Calu3 (cell line): ENCODE measurements at regions of chr14 and their contacts with region 1.

Region 1: DNA sequence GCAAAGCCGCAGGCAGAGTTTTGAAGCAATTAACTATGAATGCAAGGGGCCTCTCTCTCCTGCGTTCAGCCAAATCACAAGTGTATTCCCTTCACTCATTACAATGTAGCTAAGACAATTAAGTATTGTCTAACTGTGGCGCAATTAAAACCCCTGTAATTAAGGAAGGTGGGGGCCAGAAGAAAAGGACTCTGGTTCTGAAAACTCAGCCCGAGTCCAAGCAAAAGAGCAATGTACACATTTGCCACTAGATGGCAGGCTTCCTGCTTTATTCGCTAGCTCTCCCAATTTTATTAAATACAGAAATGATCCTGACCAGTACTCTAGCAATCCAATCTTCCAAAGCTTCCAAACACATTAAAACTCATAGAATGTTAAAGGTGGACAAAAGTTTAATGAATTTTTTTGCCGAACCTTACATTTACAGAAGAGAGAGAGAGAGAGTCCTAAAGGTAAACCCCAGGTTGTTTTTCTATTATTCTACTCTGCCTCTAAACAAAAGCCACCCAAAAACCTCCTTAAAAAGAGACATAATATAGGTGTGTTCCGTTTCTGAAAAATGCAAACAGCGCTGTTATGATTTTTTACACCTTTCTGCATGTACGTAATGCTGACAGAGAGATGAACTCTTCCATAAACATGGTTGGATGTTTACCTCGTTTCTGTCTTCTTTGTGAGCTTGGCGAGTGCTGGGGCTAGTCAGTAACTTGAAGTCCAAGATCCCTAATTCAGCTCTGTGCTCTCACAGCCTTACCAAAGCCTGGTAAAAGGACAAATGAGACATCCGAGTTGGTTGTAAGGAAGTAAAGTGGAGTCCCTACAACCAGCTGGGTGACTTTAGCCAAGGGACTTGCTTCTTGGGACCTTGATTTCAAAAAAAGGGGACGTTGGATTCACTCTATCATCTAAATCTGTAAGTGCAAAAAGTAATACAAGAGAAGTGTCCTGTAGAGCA is 50.9 kb upstream of the VASH1 start:
- DNase-seq: peak; percentile 26
- H3K4me3 Mint-ChIP-seq: no peak overlapping the region
- H3K27ac Mint-ChIP-seq: no peak overlapping the region
- H3K4me1 Mint-ChIP-seq: no peaks in the 10 kb centered on the region
- H3K27me3 Mint-ChIP-seq: peaks cover 57% of the 10 kb centered on the region
- CTCF ChIP-seq: peak; percentile 59

Region 2: GRCh38 chr14:76473481-76474263 is 236.7 kb before region 1 on chr14:
- CTCF ChIA-PET with region 1: no interaction called
- intact Hi-C with region 1: no loop called
- DNase-seq: no peak
- H3K4me3 Mint-ChIP-seq: no peak overlapping the region
- H3K27ac Mint-ChIP-seq: no peak overlapping the region
- H3K4me1 Mint-ChIP-seq: no peaks in the 10 kb centered on the region
- H3K27me3 Mint-ChIP-seq: peaks cover 76% of the 10 kb centered on the region
- CTCF ChIP-seq: no peak

Region 3: DNA sequence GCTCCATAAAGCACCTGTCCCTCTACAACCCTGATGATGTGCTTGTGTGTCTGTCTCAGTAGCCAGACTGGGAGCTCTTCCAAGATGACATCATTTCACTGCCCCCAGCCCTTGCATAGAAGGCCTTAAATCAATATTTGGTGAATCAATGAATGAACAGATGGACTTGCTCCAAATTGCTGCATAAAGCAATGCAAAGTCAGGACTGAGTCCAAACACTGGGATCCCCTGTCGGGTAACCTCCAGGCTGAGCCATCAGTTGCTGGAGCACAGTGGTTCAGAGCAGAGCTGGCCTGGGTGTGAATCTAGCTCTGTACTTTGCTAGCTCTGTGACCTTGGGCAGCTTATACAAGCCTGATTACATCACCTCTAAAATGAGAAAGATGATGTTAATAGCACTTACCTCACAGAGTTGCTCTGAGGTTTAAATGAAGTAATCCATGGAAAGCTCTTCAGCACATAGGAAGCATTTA is 69.4 kb before region 1 on chr14:
- CTCF ChIA-PET with region 1: no interaction called
- intact Hi-C with region 1: no loop called
- DNase-seq: no peak
- H3K4me3 Mint-ChIP-seq: no peak overlapping the region
- H3K27ac Mint-ChIP-seq: no peak overlapping the region
- H3K4me1 Mint-ChIP-seq: no peaks in the 10 kb centered on the region
- H3K27me3 Mint-ChIP-seq: peaks cover 75% of the 10 kb centered on the region
- CTCF ChIP-seq: no peak

Region 4: GRCh38 chr14:76690502-76691118 is 19.7 kb before region 1 on chr14:
- CTCF ChIA-PET with region 1: no interaction called
- intact Hi-C with region 1: no loop called
- DNase-seq: no peak
- H3K4me3 Mint-ChIP-seq: no peak overlapping the region
- H3K27ac Mint-ChIP-seq: no peak overlapping the region
- H3K4me1 Mint-ChIP-seq: no peaks in the 10 kb centered on the region
- H3K27me3 Mint-ChIP-seq: peaks cover 34% of the 10 kb centered on the region
- CTCF ChIP-seq: no peak

Region 5: DNA sequence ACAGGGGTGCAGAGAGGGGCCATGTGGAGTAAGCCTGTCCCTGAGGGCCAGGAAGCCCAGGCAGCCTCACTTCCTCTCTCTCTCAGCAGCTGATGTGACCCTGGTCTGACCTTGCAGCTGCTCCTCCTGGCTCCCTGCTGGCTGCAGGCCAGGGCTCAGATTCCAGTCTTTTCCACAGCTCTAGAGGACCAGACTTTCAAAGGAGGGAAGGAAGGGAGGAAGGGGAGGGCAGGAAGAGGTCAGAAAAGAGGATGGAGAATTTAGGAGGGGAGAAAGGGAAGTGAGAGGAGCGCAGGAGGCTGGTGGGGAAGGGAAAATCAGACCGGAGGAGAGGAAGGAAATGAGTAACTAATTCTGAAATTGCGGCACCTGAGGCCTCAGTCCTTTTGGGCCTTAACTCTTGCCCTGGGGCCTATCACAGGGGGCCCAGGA is 10.1 kb after region 1 on chr14:
- CTCF ChIA-PET with region 1: interaction called, 10 read pairs
- intact Hi-C with region 1: no loop called
- DNase-seq: peak; percentile 19
- H3K4me3 Mint-ChIP-seq: no peak overlapping the region
- H3K27ac Mint-ChIP-seq: no peak overlapping the region
- H3K4me1 Mint-ChIP-seq: no peaks in the 10 kb centered on the region
- H3K27me3 Mint-ChIP-seq: peaks cover 59% of the 10 kb centered on the region
- CTCF ChIP-seq: no peak

Region 6: DNA sequence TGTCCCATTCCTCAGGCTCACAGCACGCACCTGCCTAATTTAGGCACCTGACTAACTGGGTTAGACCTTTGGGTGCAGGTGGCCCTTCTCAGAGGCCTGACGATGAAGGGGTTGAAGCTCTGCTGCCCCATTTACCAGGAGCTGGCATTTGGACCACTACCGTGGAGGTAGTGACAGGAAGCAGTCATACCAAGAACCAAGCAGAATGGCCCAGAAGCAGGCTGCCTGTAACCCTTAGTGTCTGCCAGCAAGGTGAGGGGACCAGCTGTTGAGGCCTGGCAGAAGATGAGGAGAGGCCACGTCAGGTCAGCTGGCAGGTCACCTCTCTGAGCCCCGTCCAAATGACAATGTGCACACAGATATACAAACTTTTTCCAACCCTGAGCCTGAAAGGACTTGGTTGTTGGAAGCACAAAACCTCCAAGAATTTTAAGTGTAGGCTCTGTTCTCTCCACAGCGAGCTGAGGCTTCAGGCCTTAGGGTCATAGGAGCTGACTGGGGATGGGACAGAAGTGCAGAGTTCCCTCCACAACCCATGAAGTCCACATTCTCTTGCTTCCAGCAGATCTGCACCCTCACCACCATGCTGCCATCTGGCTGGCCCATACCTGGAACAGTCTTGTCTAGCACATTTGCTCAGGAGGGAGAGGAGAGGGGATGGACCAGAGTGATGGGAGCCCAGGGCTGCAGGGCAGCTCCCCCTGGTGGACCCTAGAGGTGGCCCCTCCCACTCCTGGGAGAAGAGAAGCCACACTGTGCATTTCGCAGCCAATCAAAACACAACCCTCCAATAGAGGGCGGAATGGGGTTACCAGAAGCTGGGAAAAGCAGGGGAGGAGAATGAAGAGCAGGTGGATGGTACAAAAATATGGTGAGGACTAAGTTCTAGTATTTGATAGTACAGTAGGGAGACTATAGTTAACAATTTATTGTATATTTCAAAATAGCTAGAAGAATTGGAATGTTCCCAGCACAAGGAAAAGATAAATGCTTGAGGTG is 74.2 kb after region 1 on chr14:
- CTCF ChIA-PET with region 1: interaction called, 30 read pairs
- intact Hi-C with region 1: loop called (anchors 1 kb)
- DNase-seq: peak; percentile 83
- H3K4me3 Mint-ChIP-seq: no peak overlapping the region
- H3K27ac Mint-ChIP-seq: no peak overlapping the region
- H3K4me1 Mint-ChIP-seq: no peaks in the 10 kb centered on the region
- H3K27me3 Mint-ChIP-seq: no peaks in the 10 kb centered on the region
- CTCF ChIP-seq: peak; percentile 48

Region 7: DNA sequence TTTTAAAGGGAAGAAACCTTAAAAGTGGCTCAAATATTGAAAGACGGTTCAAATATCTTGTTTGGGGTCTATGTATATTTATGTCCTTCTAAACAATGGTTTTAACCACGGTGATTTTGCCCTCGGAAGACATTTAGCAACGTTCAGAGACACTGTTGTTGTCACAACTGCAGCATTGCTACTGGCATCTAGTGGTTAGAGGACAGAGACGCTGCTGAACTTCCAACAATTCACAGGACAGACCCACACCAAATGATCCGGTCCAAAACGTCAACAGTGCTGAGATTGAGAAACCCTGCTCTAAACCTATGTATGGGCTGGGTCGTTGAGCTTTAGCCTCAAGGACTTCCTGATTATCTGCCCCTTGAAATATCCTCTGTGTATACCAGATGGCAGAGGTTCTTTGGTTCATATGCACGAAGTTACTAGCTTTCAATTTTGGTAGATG is 100.6 kb after region 1 on chr14:
- CTCF ChIA-PET with region 1: interaction called, 7 read pairs
- intact Hi-C with region 1: loop called (anchors 1 kb)
- DNase-seq: peak; percentile 12
- H3K4me3 Mint-ChIP-seq: peak overlapping the region; percentile 93
- H3K27ac Mint-ChIP-seq: no peak overlapping the region
- H3K4me1 Mint-ChIP-seq: peaks cover 11% of the 10 kb centered on the region
- H3K27me3 Mint-ChIP-seq: no peaks in the 10 kb centered on the region
- CTCF ChIP-seq: no peak

Region 8: DNA sequence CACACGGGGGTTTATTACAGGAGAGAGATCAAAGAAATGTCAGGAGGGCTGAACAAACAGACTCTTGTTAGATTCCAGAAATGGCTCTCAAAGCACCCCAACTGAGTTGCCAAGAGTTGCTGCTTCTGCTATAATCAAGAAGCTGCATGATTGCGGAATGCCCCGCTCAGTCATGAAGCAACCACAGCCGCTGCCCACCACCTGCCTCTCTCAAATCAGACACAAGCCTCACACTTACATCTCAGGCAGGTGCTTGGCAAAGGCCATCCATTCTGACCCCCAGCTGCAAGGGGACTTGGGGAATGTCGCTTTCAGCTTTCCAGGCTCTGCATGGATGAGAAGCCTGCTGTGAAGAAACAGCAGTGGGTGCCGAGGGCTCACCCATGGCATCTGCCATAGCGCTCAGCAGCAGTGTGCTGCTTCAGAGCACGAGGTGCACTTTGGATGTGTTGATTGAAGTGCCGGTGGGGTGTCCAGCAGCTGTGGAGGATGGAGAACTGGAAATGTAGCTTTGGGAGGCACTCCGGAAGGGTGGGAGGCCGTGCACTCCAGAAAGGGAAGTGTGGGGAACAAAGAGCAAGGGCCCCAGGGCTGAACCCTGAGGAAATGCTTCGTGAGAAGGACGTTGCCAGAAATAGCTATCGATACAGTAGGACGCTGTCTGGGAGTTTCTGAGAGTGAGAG is 153.5 kb after region 1 on chr14:
- CTCF ChIA-PET with region 1: no interaction called
- intact Hi-C with region 1: loop called (anchors 10 kb)
- DNase-seq: peak; percentile 33
- H3K4me3 Mint-ChIP-seq: no peak overlapping the region
- H3K27ac Mint-ChIP-seq: no peak overlapping the region
- H3K4me1 Mint-ChIP-seq: peaks cover 10% of the 10 kb centered on the region
- H3K27me3 Mint-ChIP-seq: peaks cover 70% of the 10 kb centered on the region
- CTCF ChIP-seq: no peak